Upper lobe of right lung (tissue), 1 donor: ENCODE measurements at regions of chr1 and their contacts with region 1.

Region 1: GRCh38 chr1:234997201-234997895 is 131.3 kb downstream of the TOMM20 start:
- DNase-seq: peak; percentile 93
- ATAC-seq: peak; percentile 91
- H3K4me3 ChIP-seq: no peak overlapping the region
- H3K27ac ChIP-seq: peak overlapping the region; percentile 52
- H3K4me1 ChIP-seq: peaks cover 24% of the 10 kb centered on the region
- H3K27me3 ChIP-seq: no peaks in the 10 kb centered on the region
- CTCF ChIP-seq: no peak

Region 2: DNA sequence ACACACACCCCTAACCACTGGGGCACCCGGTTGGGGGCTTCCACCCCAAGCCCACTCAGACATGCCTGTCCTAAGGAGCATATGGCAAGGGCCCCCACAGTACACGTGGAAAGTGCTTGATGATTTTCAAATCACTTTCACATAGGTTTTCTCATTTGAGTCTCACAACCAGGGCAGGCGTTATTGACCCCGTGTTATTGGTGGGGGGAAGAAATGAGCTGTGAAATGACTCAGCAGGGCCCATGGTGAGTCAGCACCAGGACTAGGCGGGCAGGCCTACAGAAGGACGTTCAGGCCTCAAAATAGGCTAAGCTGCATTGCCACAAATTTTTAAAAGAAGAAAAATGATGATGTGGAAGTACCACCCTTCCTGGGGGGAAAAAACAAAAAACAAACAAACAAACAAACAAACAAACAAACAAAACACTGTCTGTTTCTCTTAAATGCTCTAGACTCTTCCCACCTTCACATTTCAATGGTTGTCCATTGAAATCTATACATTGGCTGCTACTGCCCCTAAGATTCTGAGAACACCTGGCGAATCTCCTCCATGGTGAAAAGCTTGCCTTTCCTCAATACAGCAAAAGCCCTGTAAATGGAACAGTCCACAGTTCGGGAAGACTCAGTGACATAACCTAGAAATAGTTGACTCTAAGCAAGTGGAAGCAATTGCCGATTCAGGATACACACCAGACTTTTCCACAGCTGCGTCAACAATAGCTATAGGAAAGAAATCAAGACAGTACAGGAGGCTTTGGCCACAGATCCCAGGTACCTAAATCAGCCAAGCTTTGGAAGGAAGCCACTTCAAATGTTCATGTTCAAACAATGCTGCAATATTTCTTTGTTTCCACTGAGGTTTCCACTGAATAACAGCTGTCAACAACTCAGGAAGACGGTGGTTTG is 103.4 kb before region 1 on chr1:
- intact Hi-C with region 1: no loop called
- DNase-seq: no peak
- ATAC-seq: peak; percentile 6
- H3K4me3 ChIP-seq: no peak overlapping the region
- H3K27ac ChIP-seq: peak overlapping the region; percentile 33
- H3K4me1 ChIP-seq: peaks cover 17% of the 10 kb centered on the region
- H3K27me3 ChIP-seq: no peaks in the 10 kb centered on the region
- CTCF ChIP-seq: no peak

Region 3: DNA sequence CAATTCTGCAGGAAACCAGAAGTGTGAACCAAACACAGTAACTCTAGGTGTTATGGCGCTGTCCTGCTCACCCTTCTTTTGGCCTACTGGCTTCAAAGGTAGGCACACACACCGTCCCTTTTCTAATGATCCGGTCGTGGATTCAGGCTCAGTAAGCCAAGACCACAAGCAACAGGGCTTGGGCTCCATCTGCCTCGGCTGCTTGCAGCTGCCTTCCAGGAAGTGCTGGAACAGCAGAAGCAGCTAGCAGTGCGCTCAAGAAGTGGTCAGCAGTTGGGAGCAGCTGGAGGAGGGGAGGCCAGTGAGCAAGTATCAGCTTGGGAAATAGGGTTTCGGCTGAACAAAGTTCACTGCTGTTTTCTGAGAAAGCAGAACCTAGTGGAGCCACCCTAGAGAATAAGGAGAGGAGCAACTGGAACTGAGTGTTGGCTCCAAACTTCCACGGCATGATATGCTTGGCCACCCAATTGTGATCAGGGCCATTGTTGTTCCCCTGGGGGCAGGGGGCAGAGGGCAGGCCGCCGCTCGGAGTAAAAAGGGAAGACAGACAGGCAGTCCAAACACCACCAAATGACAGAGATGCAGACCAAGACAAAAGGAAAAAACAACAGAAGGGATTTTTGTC is 42.1 kb before region 1 on chr1:
- intact Hi-C with region 1: no loop called
- DNase-seq: peak; percentile 80
- ATAC-seq: peak; percentile 90
- H3K4me3 ChIP-seq: no peak overlapping the region
- H3K27ac ChIP-seq: peak overlapping the region; percentile 70
- H3K4me1 ChIP-seq: peaks cover 42% of the 10 kb centered on the region
- H3K27me3 ChIP-seq: no peaks in the 10 kb centered on the region
- CTCF ChIP-seq: no peak

Region 4: DNA sequence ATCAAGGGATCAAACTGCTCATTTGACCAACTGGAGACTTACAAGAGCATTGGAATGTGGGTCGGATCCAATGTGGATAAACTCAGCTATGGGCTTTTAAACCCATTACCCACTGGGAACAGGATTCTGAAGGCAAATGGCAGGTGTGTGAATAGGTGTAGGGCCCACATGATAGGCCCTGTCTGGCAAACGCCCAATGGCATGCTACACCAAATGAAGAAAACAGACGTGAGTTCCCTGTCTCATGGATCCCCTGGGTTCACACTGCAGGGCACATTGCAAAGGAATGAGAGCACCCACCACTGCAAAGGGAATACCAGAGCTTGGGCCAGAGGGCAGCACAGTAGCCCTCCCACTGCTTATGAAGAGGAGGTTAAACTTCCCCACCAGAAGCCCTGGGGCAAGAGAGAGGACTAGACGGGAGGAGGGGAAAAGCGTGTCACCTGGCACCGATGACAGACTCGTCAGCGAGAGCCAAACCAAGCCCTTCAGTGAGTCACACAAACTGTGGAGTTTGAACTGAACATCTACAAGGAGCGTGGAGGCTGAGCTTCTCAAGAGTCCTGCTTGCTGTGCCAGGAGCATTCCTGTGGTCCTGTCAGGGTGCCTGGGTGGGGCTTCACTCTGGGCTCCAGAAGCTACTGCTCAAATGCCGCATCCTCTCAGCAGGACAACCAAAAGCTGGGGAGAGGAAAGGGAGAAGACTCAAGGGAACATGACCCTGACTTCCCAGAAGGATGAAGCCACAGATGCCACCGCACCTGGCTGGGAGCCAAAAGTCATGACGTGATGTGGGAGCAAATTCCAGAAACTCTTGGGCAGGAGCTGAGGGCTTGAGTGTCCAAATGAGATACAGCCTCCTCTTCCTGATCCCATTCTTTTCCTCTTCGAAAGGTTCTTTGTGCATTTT is 70.2 kb after region 1 on chr1:
- intact Hi-C with region 1: loop called (anchors 10 kb)
- DNase-seq: peak; percentile 87
- ATAC-seq: peak; percentile 94
- H3K4me3 ChIP-seq: no peak overlapping the region
- H3K27ac ChIP-seq: peak overlapping the region; percentile 70
- H3K4me1 ChIP-seq: peaks cover 36% of the 10 kb centered on the region
- H3K27me3 ChIP-seq: no peaks in the 10 kb centered on the region
- CTCF ChIP-seq: no peak